MCF 10A (cell line): ENCODE measurements at regions of chr7 and their contacts with region 1.

Region 1: GRCh38 chr7:74575138-74575727 is 82.3 kb upstream of the GTF2I start:
- DNase-seq: peak; percentile 94
- H3K4me3 Mint-ChIP-seq: peak overlapping the region; percentile 4
- H3K27ac Mint-ChIP-seq: peak overlapping the region; percentile 57
- H3K4me1 Mint-ChIP-seq: peaks cover 13% of the 10 kb centered on the region
- H3K27me3 Mint-ChIP-seq: no peaks in the 10 kb centered on the region
- CTCF ChIP-seq: no peak

Region 2: DNA sequence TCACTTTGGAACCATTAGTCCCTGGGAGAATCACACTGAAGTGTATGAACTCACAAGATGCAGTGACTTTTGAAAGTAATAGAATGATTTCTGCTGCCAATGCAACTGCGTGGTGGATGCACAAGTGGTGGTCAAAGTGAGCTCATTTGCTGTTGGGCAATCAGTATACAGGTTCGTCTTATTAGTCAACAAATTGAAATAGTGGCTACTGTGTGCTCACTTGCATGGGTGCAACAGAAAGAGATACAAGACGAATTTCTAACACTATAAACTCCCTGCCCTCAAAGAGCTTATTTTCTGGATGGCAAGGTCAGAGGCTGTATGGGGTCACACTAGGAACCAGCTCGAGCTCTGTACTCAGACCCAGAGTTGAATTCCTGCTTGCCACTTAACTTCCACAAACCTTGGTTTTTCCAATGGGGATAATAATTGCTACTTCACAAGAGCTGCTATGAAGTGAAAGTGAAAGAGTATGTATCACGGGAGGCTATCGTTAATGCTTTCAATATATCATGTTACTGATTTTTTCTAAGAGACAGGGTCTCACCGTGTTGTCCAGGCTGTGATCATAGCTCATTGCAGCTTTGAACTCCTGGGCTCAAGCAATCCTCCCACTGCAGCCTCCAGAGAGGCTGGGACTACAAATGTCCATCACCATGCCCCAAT is 1009.4 kb before region 1 on chr7:
- CTCF ChIA-PET with region 1: no interaction called
- POLR2A ChIA-PET with region 1: no interaction called
- intact Hi-C with region 1: no loop called
- DNase-seq: no peak
- H3K4me3 Mint-ChIP-seq: no peak overlapping the region
- H3K27ac Mint-ChIP-seq: no peak overlapping the region
- H3K4me1 Mint-ChIP-seq: peaks cover 9% of the 10 kb centered on the region
- H3K27me3 Mint-ChIP-seq: no peaks in the 10 kb centered on the region
- CTCF ChIP-seq: no peak

Region 3: GRCh38 chr7:74587435-74588126 is 12.3 kb after region 1 on chr7:
- CTCF ChIA-PET with region 1: interaction called, 5 read pairs
- POLR2A ChIA-PET with region 1: interaction called, 20 read pairs
- intact Hi-C with region 1: no loop called
- DNase-seq: peak; percentile 92
- H3K4me3 Mint-ChIP-seq: no peak overlapping the region
- H3K27ac Mint-ChIP-seq: peak overlapping the region; percentile 51
- H3K4me1 Mint-ChIP-seq: peaks cover 19% of the 10 kb centered on the region
- H3K27me3 Mint-ChIP-seq: no peaks in the 10 kb centered on the region
- CTCF ChIP-seq: no peak

Region 4: DNA sequence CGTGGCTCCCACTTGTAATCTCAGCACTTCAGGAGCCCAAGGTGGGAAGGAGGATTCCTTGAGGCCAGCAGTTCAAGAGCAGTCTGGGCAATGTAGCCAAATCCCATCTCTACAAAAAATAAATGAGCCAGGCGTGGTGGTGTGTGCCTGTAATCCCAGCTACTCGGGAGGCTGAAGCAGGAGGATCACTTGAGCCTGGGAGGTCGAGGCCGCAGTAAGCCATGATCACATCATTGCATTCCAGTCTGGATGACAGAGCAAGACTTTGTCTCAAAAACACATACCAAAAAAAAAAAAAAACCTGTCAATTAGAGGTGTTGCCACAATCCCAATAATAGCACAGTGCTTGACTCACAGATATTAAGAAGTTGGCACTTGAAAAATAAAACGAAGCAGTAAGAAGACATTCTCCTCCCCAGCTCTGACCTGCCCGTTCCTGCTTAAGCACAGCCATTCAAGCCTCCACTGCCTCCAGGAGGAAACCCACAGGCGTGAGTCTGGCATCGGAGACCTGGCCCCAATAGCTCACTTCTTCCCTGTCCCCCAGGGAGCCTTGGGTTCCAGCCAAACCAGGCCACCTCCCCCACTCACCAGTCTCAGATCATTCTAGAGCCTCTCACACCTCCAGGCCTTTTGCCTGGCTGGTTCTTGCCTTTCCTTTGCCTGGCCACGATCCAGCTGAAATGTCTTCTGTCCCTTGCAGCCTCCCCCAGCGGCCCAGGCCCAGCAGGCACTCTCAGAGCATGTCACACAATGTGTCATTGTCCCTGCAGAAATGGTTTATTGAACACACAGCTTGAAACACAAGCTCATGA is 37.0 kb after region 1 on chr7:
- CTCF ChIA-PET with region 1: interaction called, 3 read pairs
- POLR2A ChIA-PET with region 1: interaction called, 12 read pairs
- intact Hi-C with region 1: no loop called
- DNase-seq: peak; percentile 85
- H3K4me3 Mint-ChIP-seq: peak overlapping the region; percentile 51
- H3K27ac Mint-ChIP-seq: peak overlapping the region; percentile 86
- H3K4me1 Mint-ChIP-seq: peaks cover 20% of the 10 kb centered on the region
- H3K27me3 Mint-ChIP-seq: no peaks in the 10 kb centered on the region
- CTCF ChIP-seq: no peak